ENCODE measurements at regions of chr5 and their contacts with region 1.

Region 1: DNA sequence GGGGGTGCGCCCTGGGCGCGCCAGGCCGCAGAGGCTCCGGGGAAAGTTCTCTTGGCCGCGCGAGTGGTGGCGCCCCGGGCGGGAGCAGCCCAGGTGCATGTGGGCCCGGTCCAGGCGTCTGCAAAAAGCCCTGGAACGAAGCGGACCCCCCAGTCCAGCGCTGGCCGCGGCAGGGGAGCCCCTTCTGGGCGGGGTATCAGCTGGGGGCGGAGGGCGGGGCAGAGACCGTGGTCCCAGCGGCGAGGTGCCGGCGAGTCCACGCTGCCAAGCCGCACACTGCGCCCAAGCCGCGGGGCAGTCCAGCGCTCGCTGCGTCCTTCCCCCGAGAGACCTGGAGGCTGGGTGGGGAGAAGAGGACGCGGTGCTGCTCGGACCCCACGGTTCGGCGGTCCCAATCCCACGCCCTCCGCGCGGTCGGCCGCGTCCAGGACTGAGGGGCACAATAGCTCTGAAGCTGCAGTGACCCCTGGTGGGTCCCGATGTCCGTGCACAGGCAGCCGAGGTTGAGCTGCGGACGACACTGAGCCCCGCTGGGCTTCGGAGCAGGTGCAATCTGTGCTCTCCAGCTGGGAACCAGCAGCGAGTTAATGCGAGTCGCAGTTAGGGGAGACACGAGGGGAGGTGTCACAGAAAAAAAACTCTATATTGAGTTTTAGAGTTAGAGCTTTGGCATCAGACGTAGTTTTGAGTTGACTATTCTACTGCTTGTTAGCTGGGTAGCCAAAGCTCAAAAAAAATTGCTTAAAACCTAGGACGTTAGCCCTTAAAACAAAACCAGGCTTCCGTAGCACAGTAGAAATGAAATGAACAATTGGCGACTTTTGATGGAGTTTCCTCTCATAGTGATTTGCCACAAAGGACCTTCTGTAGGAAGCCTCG is 1.1 kb upstream of the EPB41L4A start:
- DNase-seq: peak; percentile 76
- ATAC-seq: peak; percentile 84
- H3K4me3 ChIP-seq: peak overlapping the region in 4 of 5 experiments; percentile 67 to 79 (median 71)
- H3K4me3 Mint-ChIP-seq: peak overlapping the region; percentile 92
- H3K27ac ChIP-seq: no peak overlapping the region
- H3K27ac Mint-ChIP-seq: no peak overlapping the region
- H3K4me1 ChIP-seq: peaks cover 16 to 20% of the 10 kb centered on the region in 2 donors
- H3K4me1 Mint-ChIP-seq: peaks cover 9% of the 10 kb centered on the region
- H3K27me3 ChIP-seq: peaks cover 0 to 21% (median 16%) of the 10 kb centered on the region in 4 experiments
- H3K27me3 Mint-ChIP-seq: peaks cover 25% of the 10 kb centered on the region
- CTCF ChIP-seq: peak; percentile 70

Region 2: GRCh38 chr5:112160652-112161391 is 259.4 kb before region 1 on chr5:
- CTCF ChIA-PET with region 1: interaction called, 19 read pairs
- POLR2A ChIA-PET with region 1: no interaction called
- intact Hi-C with region 1: loop called (anchors 2 kb)
- DNase-seq: peak; percentile 95
- ATAC-seq: peak; percentile 99
- H3K4me3 ChIP-seq: peak overlapping the region; percentile 71 to 97 (median 90)
- H3K4me3 Mint-ChIP-seq: peak overlapping the region; percentile 96
- H3K27ac ChIP-seq: peak overlapping the region; percentile 52 to 83
- H3K27ac Mint-ChIP-seq: peak overlapping the region; percentile 90
- H3K4me1 ChIP-seq: peaks cover 14 to 20% of the 10 kb centered on the region in 2 donors
- H3K4me1 Mint-ChIP-seq: peaks cover 24% of the 10 kb centered on the region
- H3K27me3 ChIP-seq: no peaks in the 10 kb centered on the region
- H3K27me3 Mint-ChIP-seq: peaks cover 4% of the 10 kb centered on the region
- CTCF ChIP-seq: peak; percentile 88

Region 3: DNA sequence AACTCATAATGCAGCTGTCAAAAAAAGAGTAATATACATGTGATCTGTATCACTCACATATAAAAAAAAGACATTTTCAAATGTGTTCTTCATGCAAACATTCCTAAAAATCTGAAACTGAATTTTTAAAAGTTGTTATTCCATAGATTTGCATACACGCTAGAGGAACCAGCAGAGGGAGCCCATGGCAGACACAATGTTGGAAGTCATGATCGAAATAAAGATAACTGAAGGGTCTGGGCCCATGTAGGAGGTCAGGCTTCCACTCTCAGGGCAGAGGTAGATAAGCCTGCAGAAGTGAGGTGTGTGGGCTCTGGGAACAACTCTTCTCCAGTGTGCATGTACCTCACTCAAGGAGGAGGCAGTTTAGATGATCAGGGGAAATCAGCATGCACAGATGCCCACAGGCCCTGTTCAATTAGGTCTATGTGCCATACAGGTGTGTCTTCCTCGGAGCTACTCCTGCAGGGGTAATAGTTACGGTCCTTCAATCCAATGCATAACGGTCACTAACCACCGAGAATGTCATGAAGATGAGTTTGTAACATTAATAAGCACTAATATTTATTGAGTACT is 209.7 kb before region 1 on chr5:
- CTCF ChIA-PET with region 1: interaction called, 3 read pairs
- POLR2A ChIA-PET with region 1: no interaction called
- intact Hi-C with region 1: loop called (anchors 1 kb)
- DNase-seq: peak; percentile 33
- ATAC-seq: no peak
- H3K4me3 ChIP-seq: no peak overlapping the region
- H3K4me3 Mint-ChIP-seq: no peak overlapping the region
- H3K27ac ChIP-seq: no peak overlapping the region
- H3K27ac Mint-ChIP-seq: no peak overlapping the region
- H3K4me1 ChIP-seq: no peaks in the 10 kb centered on the region
- H3K4me1 Mint-ChIP-seq: no peaks in the 10 kb centered on the region
- H3K27me3 ChIP-seq: no peaks in the 10 kb centered on the region
- H3K27me3 Mint-ChIP-seq: peaks cover 26% of the 10 kb centered on the region
- CTCF ChIP-seq: no peak

Region 4: DNA sequence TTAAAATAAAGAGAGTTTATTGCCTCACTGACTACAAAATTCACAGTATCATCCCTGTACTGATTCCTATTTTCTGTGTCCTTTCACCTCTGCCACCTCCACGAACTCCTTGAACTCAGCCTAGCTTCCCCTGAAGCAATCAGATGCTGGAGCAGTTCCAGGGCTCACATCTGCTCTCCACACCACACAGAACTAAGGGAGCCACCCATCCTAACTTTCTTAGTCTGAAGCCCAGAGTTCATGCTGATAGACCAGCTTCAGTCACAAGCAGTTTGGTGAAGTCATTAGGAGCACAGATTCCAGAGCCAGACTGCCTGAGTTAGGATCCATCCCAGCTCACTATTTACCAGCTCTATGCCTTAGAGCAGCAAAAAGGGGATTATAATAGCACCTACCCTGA is 14.4 kb after region 1 on chr5:
- CTCF ChIA-PET with region 1: interaction called, 17 read pairs
- POLR2A ChIA-PET with region 1: no interaction called
- intact Hi-C with region 1: no loop called
- DNase-seq: no peak
- ATAC-seq: no peak
- H3K4me3 ChIP-seq: no peak overlapping the region
- H3K4me3 Mint-ChIP-seq: no peak overlapping the region
- H3K27ac ChIP-seq: no peak overlapping the region
- H3K27ac Mint-ChIP-seq: no peak overlapping the region
- H3K4me1 ChIP-seq: peaks cover 8 to 10% of the 10 kb centered on the region in 2 donors
- H3K4me1 Mint-ChIP-seq: peaks cover 14% of the 10 kb centered on the region
- H3K27me3 ChIP-seq: peaks cover 0 to 8% (median 5%) of the 10 kb centered on the region in 4 experiments
- H3K27me3 Mint-ChIP-seq: peaks cover 30% of the 10 kb centered on the region
- CTCF ChIP-seq: no peak

Region 5: GRCh38 chr5:112529525-112529924 is 109.3 kb after region 1 on chr5:
- CTCF ChIA-PET with region 1: interaction called, 86 read pairs
- POLR2A ChIA-PET with region 1: interaction called, 4 read pairs
- intact Hi-C with region 1: loop called (anchors 2 kb)
- DNase-seq: peak; percentile 56
- ATAC-seq: no peak
- H3K4me3 ChIP-seq: no peak overlapping the region
- H3K4me3 Mint-ChIP-seq: no peak overlapping the region
- H3K27ac ChIP-seq: peak overlapping the region in 1 of 2 donors; percentile 61
- H3K27ac Mint-ChIP-seq: peak overlapping the region; percentile 85
- H3K4me1 ChIP-seq: peaks cover 81 to 83% of the 10 kb centered on the region in 2 donors
- H3K4me1 Mint-ChIP-seq: peaks cover 93% of the 10 kb centered on the region
- H3K27me3 ChIP-seq: no peaks in the 10 kb centered on the region
- H3K27me3 Mint-ChIP-seq: no peaks in the 10 kb centered on the region
- CTCF ChIP-seq: peak; percentile 66

Region 6: GRCh38 chr5:112616812-112617547 is 196.8 kb after region 1 on chr5:
- CTCF ChIA-PET with region 1: no interaction called
- POLR2A ChIA-PET with region 1: no interaction called
- intact Hi-C with region 1: no loop called
- DNase-seq: no peak
- ATAC-seq: no peak
- H3K4me3 ChIP-seq: no peak overlapping the region
- H3K4me3 Mint-ChIP-seq: no peak overlapping the region
- H3K27ac ChIP-seq: no peak overlapping the region
- H3K27ac Mint-ChIP-seq: no peak overlapping the region
- H3K4me1 ChIP-seq: no peaks in the 10 kb centered on the region
- H3K4me1 Mint-ChIP-seq: no peaks in the 10 kb centered on the region
- H3K27me3 ChIP-seq: no peaks in the 10 kb centered on the region
- H3K27me3 Mint-ChIP-seq: peaks cover 4% of the 10 kb centered on the region
- CTCF ChIP-seq: no peak

Region 7: GRCh38 chr5:112707187-112708102 is 287.2 kb after region 1 on chr5:
- CTCF ChIA-PET with region 1: no interaction called
- POLR2A ChIA-PET with region 1: no interaction called
- intact Hi-C with region 1: loop called (anchors 1 kb)
- DNase-seq: peak; percentile 98
- ATAC-seq: peak; percentile 93
- H3K4me3 ChIP-seq: peak overlapping the region; percentile 68 to 91 (median 81)
- H3K4me3 Mint-ChIP-seq: peak overlapping the region; percentile 95
- H3K27ac ChIP-seq: peak overlapping the region; percentile 66 to 85
- H3K27ac Mint-ChIP-seq: peak overlapping the region; percentile 96
- H3K4me1 ChIP-seq: peaks cover 22 to 31% of the 10 kb centered on the region in 2 donors
- H3K4me1 Mint-ChIP-seq: peaks cover 51% of the 10 kb centered on the region
- H3K27me3 ChIP-seq: no peaks in the 10 kb centered on the region
- H3K27me3 Mint-ChIP-seq: no peaks in the 10 kb centered on the region
- CTCF ChIP-seq: no peak

Region 8: DNA sequence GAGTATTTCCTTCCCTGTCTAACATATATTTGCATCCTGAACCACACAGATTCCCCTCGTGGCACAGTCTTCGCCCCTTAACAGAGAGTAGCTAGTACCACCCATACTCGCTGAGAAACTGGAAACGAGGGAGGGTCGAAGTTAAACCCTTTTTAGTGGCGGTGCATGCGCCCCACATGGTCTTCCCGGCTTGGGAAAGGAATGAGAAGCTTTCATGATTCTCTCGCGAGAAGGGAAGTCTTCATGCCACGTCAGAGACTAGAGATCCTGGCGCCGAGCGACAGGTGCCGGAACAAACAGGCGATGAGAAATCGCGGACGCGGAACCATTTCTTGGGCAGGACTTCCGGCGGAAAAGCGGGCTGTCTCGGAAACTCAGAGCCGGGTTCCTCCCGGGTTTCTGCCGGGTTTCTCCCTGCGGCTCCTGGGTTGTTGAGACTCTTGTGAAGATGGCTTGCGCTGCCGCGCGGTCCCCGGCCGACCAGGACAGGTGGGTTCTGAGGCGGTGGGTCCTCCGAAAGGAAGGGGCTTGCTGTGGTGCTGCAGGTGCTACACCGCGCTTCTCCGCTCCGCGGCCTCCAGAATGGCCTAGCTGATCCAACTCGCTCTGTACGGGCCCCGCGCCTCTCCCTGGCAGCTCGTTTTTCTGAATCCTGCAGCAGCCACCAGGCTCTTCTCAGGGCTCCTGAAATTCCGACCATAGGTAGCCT is 440.9 kb after region 1 on chr5 and contains the start of gene SRP19:
- CTCF ChIA-PET with region 1: no interaction called
- POLR2A ChIA-PET with region 1: no interaction called
- intact Hi-C with region 1: no loop called
- DNase-seq: peak; percentile 94
- ATAC-seq: peak; percentile 94
- H3K4me3 ChIP-seq: peak within 1 kb of the TSS; percentile 77 to 99 (median 95)
- H3K4me3 Mint-ChIP-seq: peak within 1 kb of the TSS; percentile 98
- H3K27ac ChIP-seq: peak within 1 kb of the TSS; percentile 83 to 92
- H3K27ac Mint-ChIP-seq: peak within 1 kb of the TSS; percentile 93
- H3K4me1 ChIP-seq: peaks cover 17 to 19% of the 10 kb centered on the region in 2 donors
- H3K4me1 Mint-ChIP-seq: peaks cover 30% of the 10 kb centered on the region
- H3K27me3 ChIP-seq: peaks cover 0 to 2% (median under 1%) of the 10 kb centered on the region in 4 experiments
- H3K27me3 Mint-ChIP-seq: peaks cover 17% of the 10 kb centered on the region
- CTCF ChIP-seq: no peak
- total RNA-seq, gene SRP19: 33.8 and 41.5 TPM in 2 replicates

Region 9: GRCh38 chr5:112976432-112977309 is 556.4 kb after region 1 on chr5 and contains the start of gene DCP2:
- CTCF ChIA-PET with region 1: no interaction called
- POLR2A ChIA-PET with region 1: no interaction called
- intact Hi-C with region 1: loop called (anchors 5 kb)
- DNase-seq: peak; percentile 98
- ATAC-seq: peak; percentile 97
- H3K4me3 ChIP-seq: peak within 1 kb of the TSS; percentile 77 to 99 (median 96)
- H3K4me3 Mint-ChIP-seq: peak within 1 kb of the TSS; percentile 97
- H3K27ac ChIP-seq: peak within 1 kb of the TSS; percentile 74 to 84
- H3K27ac Mint-ChIP-seq: peak within 1 kb of the TSS; percentile 88
- H3K4me1 ChIP-seq: peaks cover 14 to 28% of the 10 kb centered on the region in 2 donors
- H3K4me1 Mint-ChIP-seq: peaks cover 43% of the 10 kb centered on the region
- H3K27me3 ChIP-seq: no peaks in the 10 kb centered on the region
- H3K27me3 Mint-ChIP-seq: no peaks in the 10 kb centered on the region
- CTCF ChIP-seq: no peak
- total RNA-seq, gene DCP2: 64.5 and 73.1 TPM in 2 replicates

Measured in B cell (primary cell).